ENCODE measurements at regions of chr12 and their contacts with region 1.

Region 1: DNA sequence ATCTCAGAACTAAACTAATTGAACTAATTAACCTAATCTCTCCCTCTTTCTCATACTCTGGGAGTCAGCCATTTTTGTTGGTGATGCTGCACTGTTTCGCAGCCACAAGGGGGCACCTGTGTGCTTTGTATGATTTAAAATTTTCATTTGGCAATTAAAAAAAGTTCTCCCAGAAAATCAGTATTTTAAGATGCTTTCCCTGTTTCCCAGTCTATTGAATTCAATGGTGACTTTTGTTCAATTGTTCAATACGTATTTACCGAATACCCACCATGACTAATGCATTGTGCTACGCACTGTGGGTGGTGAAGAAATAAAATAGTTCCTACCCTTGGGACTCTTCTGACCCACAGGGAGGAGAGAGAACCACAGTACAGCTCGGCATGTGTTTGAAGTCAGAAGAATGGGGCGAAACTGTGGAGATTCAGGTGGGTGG is 63.7 kb downstream of the ZNF664 start:
- DNase-seq: peak; percentile 36 to 50
- H3K4me3 ChIP-seq: no peak overlapping the region
- H3K27ac ChIP-seq: no peak overlapping the region
- H3K4me1 ChIP-seq: peaks cover 0 to 6% of the 10 kb centered on the region in 2 donors
- H3K27me3 ChIP-seq: no peaks in the 10 kb centered on the region
- CTCF ChIP-seq: peak; percentile 82 to 95 (median 89)
- POLR2A ChIP-seq: no peak

Region 2: DNA sequence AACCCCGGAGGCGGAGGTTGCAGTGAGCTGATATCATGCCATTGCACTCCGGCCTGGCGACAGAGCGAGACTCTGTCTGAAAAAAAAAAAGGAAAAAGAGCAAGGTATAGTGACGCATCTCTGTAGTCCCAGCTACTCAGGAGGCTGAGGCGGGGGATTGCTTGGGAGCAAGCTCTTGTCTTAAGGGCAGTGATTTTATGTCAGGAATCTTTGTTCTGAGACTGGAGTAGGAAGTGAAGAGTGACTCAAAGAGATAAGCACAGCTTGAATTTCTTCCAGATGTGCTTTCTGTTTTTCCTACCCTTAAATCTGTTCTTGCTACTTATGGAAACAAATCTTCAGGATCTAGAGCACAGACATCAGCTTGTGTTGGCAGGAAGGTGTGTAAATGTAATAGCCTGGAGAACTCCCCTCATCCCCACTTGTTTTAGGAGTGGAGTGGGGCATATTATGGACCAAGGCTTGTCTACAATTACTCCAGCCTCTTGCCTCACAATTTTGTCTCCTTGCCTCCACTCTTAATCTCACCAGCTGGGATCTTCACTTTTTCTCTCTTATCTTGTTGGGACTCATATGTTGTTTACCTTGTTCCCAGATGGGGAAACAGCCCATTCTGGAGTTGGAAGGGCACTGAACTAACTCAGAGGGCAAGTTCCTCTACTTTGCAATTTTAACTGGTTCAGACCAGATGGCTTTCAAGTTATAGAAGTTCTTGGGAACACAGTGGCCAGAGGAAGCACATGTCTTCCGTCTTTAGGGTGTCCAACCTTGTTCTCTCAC is 444.8 kb before region 1 on chr12:
- intact Hi-C with region 1: no loop called
- DNase-seq: no peak
- H3K4me3 ChIP-seq: no peak overlapping the region
- H3K27ac ChIP-seq: no peak overlapping the region
- H3K4me1 ChIP-seq: peaks cover 0 to 20% of the 10 kb centered on the region in 2 donors
- H3K27me3 ChIP-seq: no peaks in the 10 kb centered on the region
- CTCF ChIP-seq: no peak
- POLR2A ChIP-seq: no peak

Region 3: GRCh38 chr12:124318295-124319020 is 281.8 kb after region 1 on chr12:
- intact Hi-C with region 1: loop called (anchors 5 kb)
- DNase-seq: no peak
- H3K4me3 ChIP-seq: no peak overlapping the region
- H3K27ac ChIP-seq: no peak overlapping the region
- H3K4me1 ChIP-seq: no peaks in the 10 kb centered on the region
- H3K27me3 ChIP-seq: no peaks in the 10 kb centered on the region
- CTCF ChIP-seq: no peak
- POLR2A ChIP-seq: no peak

Region 4: GRCh38 chr12:124506145-124506831 is 469.6 kb after region 1 on chr12:
- intact Hi-C with region 1: no loop called
- DNase-seq: peak; percentile 71 to 79
- H3K4me3 ChIP-seq: no peak overlapping the region
- H3K27ac ChIP-seq: peak overlapping the region; percentile 28 to 73 (median 56)
- H3K4me1 ChIP-seq: peaks cover 35 to 68% of the 10 kb centered on the region in 2 donors
- H3K27me3 ChIP-seq: no peaks in the 10 kb centered on the region
- CTCF ChIP-seq: no peak
- POLR2A ChIP-seq: no peak

Measured in thyroid gland (tissue), 4 donors.